CD8-positive, alpha-beta T cell (primary cell): ENCODE measurements at regions of chr6 and their contacts with region 1.

Region 1: GRCh38 chr6:41936073-41936837 is 5.4 kb downstream of the CCND3 start:
- DNase-seq: peak; percentile 42 to 95 (median 71)
- ATAC-seq: peak; percentile 60
- H3K4me3 ChIP-seq: peak overlapping the region; percentile 9 to 13
- H3K4me3 Mint-ChIP-seq: peak overlapping the region; percentile 78
- H3K27ac ChIP-seq: peak overlapping the region; percentile 8 to 63
- H3K27ac Mint-ChIP-seq: peak overlapping the region; percentile 90
- H3K4me1 ChIP-seq: peaks cover 63% of the 10 kb centered on the region
- H3K4me1 Mint-ChIP-seq: peaks cover 72% of the 10 kb centered on the region
- H3K27me3 ChIP-seq: no peaks in the 10 kb centered on the region
- H3K27me3 Mint-ChIP-seq: no peaks in the 10 kb centered on the region
- CTCF ChIP-seq: peak; percentile 66

Region 2: DNA sequence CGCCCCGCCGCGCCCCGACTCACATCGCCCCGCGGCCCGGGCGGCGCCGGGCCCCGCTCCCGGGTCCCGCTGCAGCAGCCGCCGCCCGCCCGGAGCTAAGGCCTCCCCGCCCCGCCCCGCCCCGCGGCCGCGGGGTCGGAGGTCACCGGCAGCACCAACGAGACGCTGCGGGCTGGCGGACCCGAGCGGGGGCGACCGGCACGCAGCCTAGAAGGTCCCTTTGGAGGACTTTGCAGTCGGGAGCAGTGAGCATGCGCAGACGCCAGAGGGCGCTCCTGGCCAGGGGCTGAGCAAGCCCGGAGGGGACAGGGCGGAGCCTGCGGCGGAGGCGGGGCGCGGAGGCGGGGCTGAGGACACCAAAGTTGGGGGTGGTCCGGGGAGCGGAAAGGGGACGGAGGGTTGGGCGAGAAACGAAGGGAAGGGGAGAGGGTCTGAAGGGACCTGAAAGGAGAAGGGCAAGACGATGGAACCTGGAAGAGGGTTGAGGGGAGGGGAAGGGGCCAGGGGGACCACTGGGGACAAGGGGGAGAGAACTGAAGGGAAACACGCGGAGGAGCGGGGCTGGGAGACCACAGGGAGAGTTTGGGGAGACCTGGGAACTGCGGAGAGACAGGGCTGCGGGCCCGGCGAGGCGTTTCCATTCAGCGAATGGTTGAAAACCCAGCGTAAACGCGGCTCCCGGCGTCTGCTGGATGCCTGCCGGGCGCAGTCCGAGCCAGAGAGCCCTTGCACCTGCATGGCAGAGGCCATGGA is 156.3 kb before region 1 on chr6 and contains the start of gene FRS3:
- CTCF ChIA-PET with region 1: no interaction called
- POLR2A ChIA-PET with region 1: no interaction called
- intact Hi-C with region 1: loop called (anchors 1 to 5 kb)
- DNase-seq: peak; percentile 96 to 100 (median 99)
- ATAC-seq: peak; percentile 97
- H3K4me3 ChIP-seq: peak within 1 kb of the TSS; percentile 73 to 93
- H3K4me3 Mint-ChIP-seq: peak within 1 kb of the TSS; percentile 93
- H3K27ac ChIP-seq: peak within 1 kb of the TSS in 1 of 2 experiments; percentile 23
- H3K27ac Mint-ChIP-seq: no peak within 1 kb of the TSS
- H3K4me1 ChIP-seq: peaks cover 18% of the 10 kb centered on the region
- H3K4me1 Mint-ChIP-seq: peaks cover 21% of the 10 kb centered on the region
- H3K27me3 ChIP-seq: no peaks in the 10 kb centered on the region
- H3K27me3 Mint-ChIP-seq: peaks cover 4% of the 10 kb centered on the region
- CTCF ChIP-seq: peak; percentile 74
- total RNA-seq, gene FRS3: 3.7 to 6.2 TPM

Region 3: GRCh38 chr6:41895300-41896233 is 40.7 kb before region 1 on chr6 and contains the start of gene USP49:
- CTCF ChIA-PET with region 1: interaction called, 3 read pairs
- POLR2A ChIA-PET with region 1: no interaction called
- intact Hi-C with region 1: loop called (anchors 2 kb)
- DNase-seq: peak; percentile 80 to 94 (median 91)
- ATAC-seq: peak; percentile 95
- H3K4me3 ChIP-seq: peak within 1 kb of the TSS; percentile 78 to 90
- H3K4me3 Mint-ChIP-seq: no peak within 1 kb of the TSS
- H3K27ac ChIP-seq: peak within 1 kb of the TSS; percentile 55 to 77
- H3K27ac Mint-ChIP-seq: peak within 1 kb of the TSS; percentile 89
- H3K4me1 ChIP-seq: peaks cover 24% of the 10 kb centered on the region
- H3K4me1 Mint-ChIP-seq: peaks cover 10% of the 10 kb centered on the region
- H3K27me3 ChIP-seq: no peaks in the 10 kb centered on the region
- H3K27me3 Mint-ChIP-seq: no peaks in the 10 kb centered on the region
- CTCF ChIP-seq: no peak
- total RNA-seq, gene USP49: 1.6 to 1.8 TPM

Region 4: DNA sequence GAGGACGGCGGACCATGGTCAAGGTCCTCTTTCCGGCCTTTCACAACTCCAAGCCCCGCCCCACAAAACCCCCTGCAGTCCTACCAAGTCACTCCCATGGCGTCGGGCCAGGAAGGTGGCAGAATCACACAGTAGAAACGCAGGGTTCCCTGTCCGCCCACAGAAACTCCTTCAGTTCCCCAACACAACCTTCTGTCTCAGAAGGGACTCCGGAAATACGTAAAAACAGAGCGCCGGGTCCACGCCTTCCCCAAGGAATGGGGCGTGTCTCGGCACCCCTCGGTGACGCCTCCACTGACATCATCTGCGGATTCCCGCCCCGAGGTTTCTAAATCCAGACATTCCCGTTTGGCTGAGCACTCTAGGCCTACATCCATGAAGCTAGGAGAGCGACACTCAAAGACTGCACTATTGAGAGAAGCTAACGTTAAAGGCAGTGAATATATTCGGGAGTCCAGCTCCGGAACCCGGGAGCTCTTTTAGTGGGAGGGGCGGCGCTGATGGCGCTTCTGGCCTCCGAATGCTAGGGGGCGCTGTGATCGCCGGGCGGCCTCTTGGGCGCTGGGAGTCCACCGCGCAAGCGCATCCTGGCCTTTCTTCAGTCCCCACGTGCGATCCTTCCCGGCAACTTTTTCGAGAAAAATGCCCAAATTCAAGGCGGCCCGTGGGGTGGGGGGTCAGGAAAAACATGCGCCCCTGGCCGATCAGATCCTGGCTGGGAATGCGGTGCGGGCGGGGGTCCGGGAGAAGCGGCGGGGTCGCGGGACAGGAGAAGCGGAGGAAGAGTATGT is 15.1 kb before region 1 on chr6 and contains the starts of genes BYSL and MED20:
- CTCF ChIA-PET with region 1: interaction called, 29 read pairs
- POLR2A ChIA-PET with region 1: interaction called, 13 read pairs
- intact Hi-C with region 1: loop called (anchors 1 kb)
- DNase-seq: peak; percentile 86 to 98 (median 94)
- ATAC-seq: peak; percentile 92
- H3K4me3 ChIP-seq: peak within 1 kb of the TSS; percentile 96 to 97
- H3K4me3 Mint-ChIP-seq: peak within 1 kb of the TSS; percentile 100
- H3K27ac ChIP-seq: peak within 1 kb of the TSS; percentile 83 to 99
- H3K27ac Mint-ChIP-seq: peak within 1 kb of the TSS; percentile 100
- H3K4me1 ChIP-seq: peaks cover 32% of the 10 kb centered on the region
- H3K4me1 Mint-ChIP-seq: peaks cover 53% of the 10 kb centered on the region
- H3K27me3 ChIP-seq: no peaks in the 10 kb centered on the region
- H3K27me3 Mint-ChIP-seq: no peaks in the 10 kb centered on the region
- CTCF ChIP-seq: peak; percentile 97
- total RNA-seq, gene BYSL: 3.2 to 6.2 TPM
- total RNA-seq, gene MED20: 1.8 TPM

Region 5: DNA sequence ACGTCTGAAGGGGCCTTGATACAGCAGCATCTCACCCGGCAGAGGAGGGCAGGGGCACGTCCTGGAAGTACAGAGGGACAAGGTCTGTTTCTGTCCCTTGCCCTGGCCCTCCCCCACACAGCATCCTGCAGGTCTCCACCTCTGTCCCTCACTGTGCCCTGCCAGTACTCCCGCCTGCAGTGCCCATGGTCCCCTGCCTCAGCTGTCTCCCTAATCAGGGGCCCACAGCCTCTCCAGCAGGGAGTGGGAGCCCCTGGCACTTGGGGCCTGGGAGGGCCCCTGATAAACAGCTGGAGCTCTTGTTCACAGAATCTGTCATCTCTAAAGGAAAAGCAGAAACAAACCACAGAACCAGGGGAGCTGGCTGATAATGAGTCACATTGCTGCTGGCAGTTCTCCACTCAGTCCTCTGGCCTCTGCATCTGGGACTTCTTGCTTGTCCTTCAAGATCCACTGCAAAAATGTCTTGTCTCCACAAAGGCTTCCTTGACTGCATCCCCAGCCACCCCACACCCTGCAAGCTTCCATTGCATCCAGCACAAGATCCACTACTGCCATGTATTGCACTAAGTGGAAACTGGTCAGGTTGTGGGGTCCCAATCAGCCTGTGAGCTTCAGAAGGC is 80.9 kb after region 1 on chr6:
- CTCF ChIA-PET with region 1: interaction called, 3 read pairs
- POLR2A ChIA-PET with region 1: interaction called, 3 read pairs
- intact Hi-C with region 1: loop called (anchors 5 kb)
- DNase-seq: peak in 1 of 9 experiments; percentile 31
- ATAC-seq: peak; percentile 16
- H3K4me3 ChIP-seq: no peak overlapping the region
- H3K4me3 Mint-ChIP-seq: peak overlapping the region; percentile 19
- H3K27ac ChIP-seq: peak overlapping the region in 1 of 2 experiments; percentile 40
- H3K27ac Mint-ChIP-seq: peak overlapping the region; percentile 78
- H3K4me1 ChIP-seq: peaks cover 57% of the 10 kb centered on the region
- H3K4me1 Mint-ChIP-seq: peaks cover 68% of the 10 kb centered on the region
- H3K27me3 ChIP-seq: no peaks in the 10 kb centered on the region
- H3K27me3 Mint-ChIP-seq: no peaks in the 10 kb centered on the region
- CTCF ChIP-seq: no peak

Region 6: DNA sequence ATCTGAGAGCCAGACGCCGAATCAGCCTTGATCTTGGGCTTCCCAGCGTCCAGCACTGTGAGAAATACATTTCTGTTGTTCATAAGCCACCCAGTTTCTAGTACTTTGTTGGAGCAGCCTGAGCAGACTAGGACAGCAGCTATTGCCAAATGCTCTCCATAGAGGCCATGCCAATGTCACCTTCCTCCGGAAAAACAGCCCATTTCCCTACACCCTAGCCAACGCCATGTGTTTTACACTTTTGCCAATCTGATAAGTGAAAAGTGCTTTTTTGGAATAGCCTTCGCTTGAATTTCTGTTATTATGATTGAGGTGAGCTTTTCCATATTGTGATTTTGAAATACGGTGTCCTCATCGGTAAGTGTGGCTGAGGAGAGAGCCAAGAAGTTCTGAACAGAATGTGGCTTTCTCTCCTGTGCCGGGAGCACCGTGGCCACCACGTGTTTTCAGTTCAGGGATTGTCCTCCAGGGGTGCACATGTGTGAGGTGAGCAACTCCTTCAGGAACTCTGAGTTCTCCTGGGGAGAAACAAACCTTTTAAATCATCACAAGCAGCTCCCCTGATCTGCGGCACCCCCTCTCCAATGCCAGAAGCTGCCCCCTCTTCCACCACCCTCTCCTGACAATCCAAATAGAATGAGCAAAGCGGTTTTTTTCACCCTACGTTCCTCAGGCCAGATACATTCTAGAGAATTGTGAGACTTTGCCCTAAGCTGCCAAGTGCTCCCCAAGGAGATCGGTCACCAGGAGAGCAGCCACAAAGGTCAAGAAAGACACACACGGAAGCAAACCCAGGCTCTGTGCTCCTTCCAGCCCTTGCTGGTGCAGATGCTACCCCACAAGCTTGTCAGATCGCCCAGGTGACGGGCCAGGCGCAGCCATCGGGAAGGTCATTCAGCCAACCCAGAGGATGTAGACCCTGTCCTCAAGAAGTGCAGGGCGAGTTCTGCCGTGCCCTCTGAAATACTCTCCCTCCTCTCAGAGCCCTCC is 150.1 kb after region 1 on chr6:
- CTCF ChIA-PET with region 1: no interaction called
- POLR2A ChIA-PET with region 1: no interaction called
- intact Hi-C with region 1: no loop called
- DNase-seq: no peak
- ATAC-seq: no peak
- H3K4me3 ChIP-seq: no peak overlapping the region
- H3K4me3 Mint-ChIP-seq: no peak overlapping the region
- H3K27ac ChIP-seq: no peak overlapping the region
- H3K27ac Mint-ChIP-seq: no peak overlapping the region
- H3K4me1 ChIP-seq: no peaks in the 10 kb centered on the region
- H3K4me1 Mint-ChIP-seq: no peaks in the 10 kb centered on the region
- H3K27me3 ChIP-seq: no peaks in the 10 kb centered on the region
- H3K27me3 Mint-ChIP-seq: no peaks in the 10 kb centered on the region
- CTCF ChIP-seq: no peak

Region 7: DNA sequence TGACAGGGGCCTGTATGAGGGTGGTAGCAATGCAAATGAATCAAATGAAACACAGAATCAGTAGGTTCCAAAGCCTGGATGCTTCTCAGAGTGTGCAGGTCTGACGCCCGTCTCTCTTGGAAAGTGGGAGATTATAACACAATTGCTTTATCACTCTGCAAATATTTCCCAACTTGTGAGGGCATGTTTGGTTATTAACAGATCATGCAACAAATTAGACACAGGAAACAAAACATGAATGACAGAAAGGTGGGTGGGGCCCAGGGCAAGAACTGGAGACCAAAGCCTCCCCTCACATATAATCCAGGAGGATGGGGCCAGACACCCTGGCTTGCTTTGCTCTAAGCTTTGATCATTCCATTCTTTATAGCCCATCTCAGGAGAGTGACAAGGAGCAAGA is 390.0 kb after region 1 on chr6:
- CTCF ChIA-PET with region 1: no interaction called
- POLR2A ChIA-PET with region 1: no interaction called
- intact Hi-C with region 1: no loop called
- DNase-seq: no peak
- ATAC-seq: no peak
- H3K4me3 ChIP-seq: no peak overlapping the region
- H3K4me3 Mint-ChIP-seq: no peak overlapping the region
- H3K27ac ChIP-seq: no peak overlapping the region
- H3K27ac Mint-ChIP-seq: no peak overlapping the region
- H3K4me1 ChIP-seq: no peaks in the 10 kb centered on the region
- H3K4me1 Mint-ChIP-seq: peaks cover 60% of the 10 kb centered on the region
- H3K27me3 ChIP-seq: no peaks in the 10 kb centered on the region
- H3K27me3 Mint-ChIP-seq: no peaks in the 10 kb centered on the region
- CTCF ChIP-seq: no peak